SK-N-SH (cell line): ENCODE measurements at regions of chr4 and their contacts with region 1.

Region 1: GRCh38 chr4:52545099-52546069 is 113.7 kb downstream of the USP46 start:
- DNase-seq: peak; percentile 79
- H3K4me3 ChIP-seq: peak overlapping the region; percentile 27 to 46; a peak in 2 of 4 replicates
- H3K27ac ChIP-seq: peak overlapping the region in 1 of 2 experiments; percentile 47; a peak in 2 of 4 replicates
- H3K4me1 ChIP-seq: peaks cover 0 to 8% of the 10 kb centered on the region in 2 experiments; a peak in 2 of 4 replicates
- H3K27me3 ChIP-seq: no peaks in the 10 kb centered on the region
- CTCF ChIP-seq: peak; percentile 96
- EP300 ChIP-seq: peak in 1 of 2 experiments; percentile 49; a peak in 1 of 4 replicates
- RAD21 ChIP-seq: peak; percentile 98

Region 2: DNA sequence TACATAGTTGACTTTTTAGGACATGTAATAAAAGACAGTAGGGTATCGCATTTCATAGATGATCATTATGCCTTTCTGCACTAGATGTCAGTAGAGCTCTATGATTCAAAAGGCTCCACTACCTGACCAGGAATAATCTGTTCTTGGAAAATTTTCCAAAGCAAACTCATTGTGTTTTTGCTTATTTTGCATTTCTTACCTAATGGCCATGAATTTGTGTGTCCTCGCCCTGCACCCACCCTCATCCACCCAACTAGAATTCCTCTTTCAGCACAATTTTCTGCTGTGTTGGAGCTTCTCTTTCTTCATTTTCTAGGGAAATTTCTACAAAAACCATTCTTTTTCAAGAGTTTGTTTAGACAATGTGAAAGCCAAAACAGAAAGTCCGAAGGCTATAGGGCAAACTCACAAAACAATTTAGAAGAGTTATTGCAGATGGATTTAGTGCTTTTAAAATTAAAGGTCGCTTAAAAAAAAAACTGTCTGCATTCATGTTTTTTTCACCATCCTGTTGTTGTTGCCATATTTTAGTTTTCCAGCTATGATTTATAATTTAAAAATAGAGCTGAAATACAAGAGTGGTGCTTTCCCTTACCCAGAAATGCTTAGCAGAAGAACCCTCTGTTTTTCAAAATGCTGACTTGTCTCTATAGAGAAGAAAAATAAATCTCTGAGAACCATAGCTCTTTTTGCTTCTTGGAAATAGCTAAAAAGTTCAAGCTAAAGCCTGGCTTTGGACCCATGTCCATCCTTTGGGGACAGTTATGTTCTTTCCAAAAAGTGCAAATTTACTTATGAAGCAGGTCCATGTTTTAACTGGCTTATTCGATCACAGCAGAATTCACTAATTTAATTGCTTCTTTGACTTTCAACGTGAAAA is 310.6 kb before region 1 on chr4:
- CTCF ChIA-PET with region 1: interaction called, 10 read pairs
- POLR2A ChIA-PET with region 1: no interaction called
- DNase-seq: peak; percentile 38
- H3K4me3 ChIP-seq: no peak overlapping the region; a peak in 2 of 4 replicates
- H3K27ac ChIP-seq: no peak overlapping the region; a peak in 1 of 4 replicates
- H3K4me1 ChIP-seq: no peaks in the 10 kb centered on the region; a peak in 1 of 4 replicates
- H3K27me3 ChIP-seq: no peaks in the 10 kb centered on the region
- CTCF ChIP-seq: peak; percentile 56
- EP300 ChIP-seq: no peak
- RAD21 ChIP-seq: peak; percentile 95

Region 3: DNA sequence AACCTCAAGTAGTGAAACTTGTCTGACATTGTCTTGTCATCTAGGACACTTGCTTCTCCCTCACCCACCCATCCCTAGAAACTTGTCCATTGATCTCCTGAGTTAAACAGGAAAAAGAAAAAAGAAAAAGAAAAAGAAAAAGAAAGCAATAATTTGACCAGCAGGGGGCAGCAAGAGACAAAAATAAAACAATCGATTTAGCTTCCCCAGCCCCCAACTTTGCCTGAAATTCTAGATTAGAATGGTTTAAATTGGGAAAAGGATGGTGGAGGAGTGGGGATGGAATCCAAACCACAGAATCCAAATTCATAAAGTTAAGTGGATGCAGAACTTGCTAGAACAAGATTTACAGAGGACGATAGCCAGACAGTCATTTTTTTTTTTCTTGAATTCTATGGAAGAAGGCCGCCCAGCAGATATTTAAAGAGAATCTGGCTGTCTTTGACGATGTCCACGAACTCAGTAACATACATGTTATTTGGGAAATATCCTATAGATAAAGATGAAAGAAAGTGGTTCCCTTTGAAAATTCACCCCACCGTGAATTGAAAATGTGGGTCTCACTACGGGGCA is 169.2 kb before region 1 on chr4:
- CTCF ChIA-PET with region 1: interaction called, 25 read pairs
- POLR2A ChIA-PET with region 1: no interaction called
- DNase-seq: peak; percentile 41
- H3K4me3 ChIP-seq: peak overlapping the region in 1 of 2 experiments; percentile 32; a peak in 1 of 4 replicates
- H3K27ac ChIP-seq: no peak overlapping the region
- H3K4me1 ChIP-seq: peaks cover 0 to 3% of the 10 kb centered on the region in 2 experiments; a peak in 1 of 4 replicates
- H3K27me3 ChIP-seq: no peaks in the 10 kb centered on the region
- CTCF ChIP-seq: peak; percentile 80
- EP300 ChIP-seq: no peak
- RAD21 ChIP-seq: peak; percentile 86

Region 4: GRCh38 chr4:52420330-52420729 is 125.1 kb before region 1 on chr4:
- CTCF ChIA-PET with region 1: no interaction called
- POLR2A ChIA-PET with region 1: no interaction called
- DNase-seq: no peak
- H3K4me3 ChIP-seq: no peak overlapping the region
- H3K27ac ChIP-seq: no peak overlapping the region; a peak in 1 of 4 replicates
- H3K4me1 ChIP-seq: peaks cover 0 to 24% of the 10 kb centered on the region in 2 experiments; a peak in 2 of 4 replicates
- H3K27me3 ChIP-seq: no peaks in the 10 kb centered on the region
- CTCF ChIP-seq: no peak
- EP300 ChIP-seq: no peak
- RAD21 ChIP-seq: no peak

Region 5: GRCh38 chr4:52568351-52568750 is 23.0 kb after region 1 on chr4:
- CTCF ChIA-PET with region 1: interaction called, 11 read pairs
- POLR2A ChIA-PET with region 1: no interaction called
- DNase-seq: no peak
- H3K4me3 ChIP-seq: no peak overlapping the region
- H3K27ac ChIP-seq: no peak overlapping the region
- H3K4me1 ChIP-seq: no peaks in the 10 kb centered on the region; a peak in 1 of 4 replicates
- H3K27me3 ChIP-seq: no peaks in the 10 kb centered on the region
- CTCF ChIP-seq: no peak
- EP300 ChIP-seq: no peak
- RAD21 ChIP-seq: no peak

Region 6: GRCh38 chr4:52588097-52588782 is 42.9 kb after region 1 on chr4:
- CTCF ChIA-PET with region 1: interaction called, 11 read pairs
- POLR2A ChIA-PET with region 1: no interaction called
- DNase-seq: peak; percentile 56
- H3K4me3 ChIP-seq: no peak overlapping the region
- H3K27ac ChIP-seq: no peak overlapping the region
- H3K4me1 ChIP-seq: no peaks in the 10 kb centered on the region
- H3K27me3 ChIP-seq: no peaks in the 10 kb centered on the region
- CTCF ChIP-seq: peak; percentile 54
- EP300 ChIP-seq: no peak
- RAD21 ChIP-seq: peak; percentile 60

Region 7: GRCh38 chr4:52659001-52659721 is 113.8 kb after region 1 on chr4 and contains the start of gene USP46:
- CTCF ChIA-PET with region 1: interaction called, 12 read pairs
- POLR2A ChIA-PET with region 1: no interaction called
- DNase-seq: peak; percentile 97
- H3K4me3 ChIP-seq: peak within 1 kb of the TSS; percentile 88
- H3K27ac ChIP-seq: peak within 1 kb of the TSS; percentile 79 to 90
- H3K4me1 ChIP-seq: peaks cover 8 to 14% of the 10 kb centered on the region in 2 experiments; a peak in 2 of 4 replicates
- H3K27me3 ChIP-seq: no peaks in the 10 kb centered on the region
- CTCF ChIP-seq: no peak
- EP300 ChIP-seq: no peak
- RAD21 ChIP-seq: no peak
- polyA plus RNA-seq, gene USP46: 4.5 and 6.0 TPM in 2 replicates

Region 8: DNA sequence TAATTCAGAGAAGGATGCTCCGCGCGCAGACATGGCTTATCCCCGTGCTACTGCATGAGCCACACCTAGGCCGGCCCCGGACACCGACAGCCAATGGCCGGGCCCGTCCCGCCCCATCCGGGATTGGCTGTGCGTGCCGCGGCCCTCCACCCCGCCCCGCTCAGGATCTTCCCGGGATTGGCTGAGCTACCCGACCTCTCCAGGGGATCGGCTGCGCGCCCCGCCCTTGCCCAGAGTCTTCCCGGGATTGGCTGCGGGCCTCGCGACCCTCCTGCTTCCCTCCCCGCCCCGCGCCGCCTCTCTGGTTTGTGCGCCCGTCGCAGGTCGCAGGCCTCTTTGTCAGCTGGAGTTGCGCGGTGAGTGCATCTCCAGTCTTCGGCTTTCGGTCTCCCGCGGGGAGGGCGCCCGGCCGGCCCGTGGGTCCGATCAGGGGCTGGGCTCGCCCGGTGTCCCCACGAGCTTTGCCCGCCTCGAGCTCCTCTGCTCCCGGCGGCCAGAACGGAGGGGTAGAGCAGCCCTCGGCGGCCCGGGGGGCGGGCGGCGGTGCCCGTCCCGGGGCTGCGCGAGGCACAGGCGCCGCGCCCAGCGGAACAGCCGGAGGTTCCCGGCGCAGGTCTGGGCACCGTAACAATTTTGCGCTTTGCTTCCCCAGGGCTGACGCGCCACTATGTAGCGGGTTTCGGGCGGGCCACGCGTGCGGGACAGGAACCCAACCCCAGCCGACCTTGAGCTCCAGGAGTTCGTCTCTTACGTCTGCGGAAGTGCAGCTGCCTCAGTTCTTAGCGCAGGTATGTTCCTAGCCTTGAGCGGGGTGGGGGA is 167.0 kb after region 1 on chr4:
- CTCF ChIA-PET with region 1: interaction called, 13 read pairs
- POLR2A ChIA-PET with region 1: interaction called, 8 read pairs
- DNase-seq: peak; percentile 98
- H3K4me3 ChIP-seq: peak overlapping the region; percentile 89
- H3K27ac ChIP-seq: peak overlapping the region; percentile 34 to 85; a peak in 3 of 4 replicates
- H3K4me1 ChIP-seq: peaks cover 10 to 33% of the 10 kb centered on the region in 2 experiments; a peak in 2 of 4 replicates
- H3K27me3 ChIP-seq: no peaks in the 10 kb centered on the region
- CTCF ChIP-seq: no peak
- EP300 ChIP-seq: no peak
- RAD21 ChIP-seq: no peak